PC-3 (cell line): ENCODE measurements at regions of chr10 and their contacts with region 1.

Region 1: DNA sequence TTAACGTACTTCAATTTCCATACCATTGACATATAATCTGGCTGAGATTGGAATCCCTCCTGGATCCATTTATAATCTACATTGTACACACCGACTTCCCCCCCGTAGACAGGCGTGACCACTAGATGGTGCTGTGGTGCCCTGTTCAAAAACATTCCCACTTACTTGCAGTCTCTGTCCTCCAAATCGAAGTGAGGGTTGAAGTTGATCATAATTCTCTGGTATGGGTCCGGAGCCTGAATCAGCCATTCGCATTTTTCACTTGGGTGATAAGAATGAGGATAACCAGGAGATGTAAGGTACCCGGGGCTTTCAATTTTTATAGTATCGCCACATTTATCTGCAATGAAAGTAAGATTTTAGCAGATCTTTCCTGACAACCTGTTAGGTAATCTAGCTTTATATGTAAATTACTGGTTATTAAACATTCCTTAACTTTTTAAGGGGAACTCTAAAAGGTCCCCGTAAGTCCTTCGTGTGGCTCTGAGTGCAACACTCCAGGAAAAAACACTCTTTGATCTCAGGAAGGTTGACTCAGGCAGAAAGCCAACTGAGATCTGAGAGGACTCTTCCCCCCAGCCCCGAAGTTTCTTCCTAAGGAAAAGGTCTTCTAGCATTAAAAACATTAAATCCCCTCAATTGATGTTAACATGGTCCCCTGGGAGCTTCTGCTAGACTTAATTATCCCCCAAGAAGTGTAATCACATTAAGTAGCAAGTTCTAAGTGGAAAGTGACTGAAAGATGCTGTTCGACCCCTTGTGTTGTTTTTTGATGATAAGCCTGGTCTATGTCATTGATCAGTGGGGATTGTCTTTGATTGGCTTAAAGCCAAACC is 3.7 kb downstream of the NRP1 start:
- DNase-seq: peak; percentile 100
- ATAC-seq: peak; percentile 21
- H3K4me3 ChIP-seq: peak overlapping the region; percentile 69
- H3K27ac ChIP-seq: peak overlapping the region; percentile 86
- H3K4me1 ChIP-seq: peaks cover 46% of the 10 kb centered on the region
- H3K27me3 ChIP-seq: no peaks in the 10 kb centered on the region
- CTCF ChIP-seq: peak; percentile 100

Region 2: GRCh38 chr10:33216661-33217427 is 113.9 kb before region 1 on chr10:
- CTCF ChIA-PET with region 1: no interaction called
- POLR2A ChIA-PET with region 1: interaction called, 3 read pairs
- intact Hi-C with region 1: loop called (anchors 1 kb)
- DNase-seq: peak; percentile 100
- ATAC-seq: peak; percentile 91
- H3K4me3 ChIP-seq: peak overlapping the region; percentile 6; the same call in 1 of the 2 replicates
- H3K27ac ChIP-seq: peak overlapping the region; percentile 65
- H3K4me1 ChIP-seq: peaks cover 46% of the 10 kb centered on the region
- H3K27me3 ChIP-seq: no peaks in the 10 kb centered on the region
- CTCF ChIP-seq: no peak

Region 3: DNA sequence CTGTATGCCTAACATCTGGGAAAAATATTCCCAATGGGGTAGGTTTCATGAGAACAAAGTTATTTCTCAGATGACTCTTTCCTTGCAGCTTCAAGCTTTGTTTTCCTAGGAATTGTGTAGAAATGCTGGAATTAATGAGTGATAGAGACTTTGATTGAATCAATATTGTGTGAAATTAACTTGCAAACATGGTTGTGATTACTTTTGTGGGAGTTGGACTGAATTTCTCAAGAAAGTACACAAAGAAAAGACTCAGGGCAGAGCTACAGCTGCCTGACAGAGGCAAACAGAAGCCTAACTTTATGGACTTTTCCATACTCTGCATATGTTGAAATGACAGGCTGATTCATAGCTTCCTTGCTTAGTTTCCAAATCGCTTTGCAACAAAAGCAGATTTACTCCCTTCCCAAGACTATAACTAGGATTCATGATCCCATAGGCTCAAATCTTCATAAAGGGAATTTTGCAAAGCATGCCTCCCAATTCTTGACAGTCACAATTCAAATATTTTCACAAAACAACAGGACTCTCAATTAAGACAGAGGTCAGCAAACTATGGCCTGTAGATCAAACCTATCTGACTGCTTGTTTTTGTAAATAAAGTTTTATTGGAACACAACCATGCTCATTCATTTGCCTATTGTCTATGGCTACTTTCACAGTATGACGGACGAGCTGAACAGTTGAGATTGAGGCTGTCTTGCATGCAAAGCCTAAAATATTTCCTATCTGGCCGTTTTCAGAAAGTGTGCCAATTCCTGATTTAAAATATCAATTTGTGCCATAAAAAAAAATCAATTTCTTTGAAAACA is 23.9 kb before region 1 on chr10:
- CTCF ChIA-PET with region 1: no interaction called
- POLR2A ChIA-PET with region 1: no interaction called
- intact Hi-C with region 1: no loop called
- DNase-seq: peak; percentile 86
- ATAC-seq: peak; percentile 59
- H3K4me3 ChIP-seq: no peak overlapping the region
- H3K27ac ChIP-seq: peak overlapping the region; percentile 52
- H3K4me1 ChIP-seq: peaks cover 21% of the 10 kb centered on the region
- H3K27me3 ChIP-seq: no peaks in the 10 kb centered on the region
- CTCF ChIP-seq: no peak

Region 4: GRCh38 chr10:33559105-33559504 is 228.3 kb after region 1 on chr10:
- CTCF ChIA-PET with region 1: no interaction called
- POLR2A ChIA-PET with region 1: no interaction called
- intact Hi-C with region 1: loop called (anchors 1 kb)
- DNase-seq: peak; percentile 100
- ATAC-seq: peak; percentile 100
- H3K4me3 ChIP-seq: no peak overlapping the region
- H3K27ac ChIP-seq: no peak overlapping the region
- H3K4me1 ChIP-seq: peaks cover 13% of the 10 kb centered on the region
- H3K27me3 ChIP-seq: no peaks in the 10 kb centered on the region
- CTCF ChIP-seq: peak; percentile 41; the same call in 1 of the 2 replicates

Region 5: DNA sequence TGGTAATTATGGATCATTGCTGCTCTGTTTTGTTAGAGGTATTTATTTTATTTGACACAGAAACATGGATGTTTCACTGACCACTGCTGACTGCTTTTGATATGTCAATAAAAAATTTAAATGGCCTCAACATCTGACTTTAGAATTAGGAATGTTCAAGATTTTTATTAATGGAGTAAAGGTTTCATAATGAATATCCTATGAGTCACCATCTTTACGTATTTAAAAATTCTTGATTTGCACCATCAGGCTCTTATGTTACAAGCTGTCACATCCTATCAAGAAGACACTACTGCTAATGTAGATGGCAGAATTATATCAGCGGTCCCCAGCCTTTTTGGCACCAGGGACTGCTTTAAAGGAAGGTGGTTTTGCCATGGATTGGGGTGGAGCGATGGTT is 582.4 kb after region 1 on chr10:
- CTCF ChIA-PET with region 1: no interaction called
- POLR2A ChIA-PET with region 1: no interaction called
- intact Hi-C with region 1: loop called (anchors 5 kb)
- DNase-seq: peak; percentile 94
- ATAC-seq: peak; percentile 92
- H3K4me3 ChIP-seq: no peak overlapping the region
- H3K27ac ChIP-seq: peak overlapping the region; percentile 0; the same call in 1 of the 2 replicates
- H3K4me1 ChIP-seq: peaks cover 14% of the 10 kb centered on the region
- H3K27me3 ChIP-seq: no peaks in the 10 kb centered on the region
- CTCF ChIP-seq: no peak

Region 6: GRCh38 chr10:34139559-34139958 is 808.8 kb after region 1 on chr10:
- CTCF ChIA-PET with region 1: no interaction called
- POLR2A ChIA-PET with region 1: no interaction called
- intact Hi-C with region 1: loop called (anchors 5 kb)
- DNase-seq: peak; percentile 42
- ATAC-seq: no peak
- H3K4me3 ChIP-seq: no peak overlapping the region
- H3K27ac ChIP-seq: no peak overlapping the region
- H3K4me1 ChIP-seq: peaks cover 23% of the 10 kb centered on the region
- H3K27me3 ChIP-seq: no peaks in the 10 kb centered on the region
- CTCF ChIP-seq: no peak

Region 7: DNA sequence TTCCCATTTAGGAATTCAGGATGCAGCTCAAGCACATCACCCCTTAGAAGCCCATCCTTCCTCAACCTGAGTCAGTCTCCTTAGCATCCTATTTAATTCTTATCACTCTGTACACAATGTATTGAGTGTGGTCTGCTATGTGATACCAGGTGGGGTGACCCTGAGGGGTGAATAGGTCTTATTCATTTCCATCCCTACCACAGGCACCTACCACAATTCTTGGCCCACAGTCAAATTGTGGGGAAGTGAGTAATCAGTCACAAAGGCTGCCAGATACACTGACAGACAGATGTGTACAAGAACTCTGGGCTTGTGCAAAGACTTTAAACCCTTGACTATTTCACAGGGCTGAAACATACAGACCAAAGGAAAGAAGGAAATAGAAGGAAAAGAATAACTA is 923.8 kb after region 1 on chr10:
- CTCF ChIA-PET with region 1: no interaction called
- POLR2A ChIA-PET with region 1: no interaction called
- intact Hi-C with region 1: loop called (anchors 2 kb)
- DNase-seq: peak; percentile 100
- ATAC-seq: peak; percentile 89
- H3K4me3 ChIP-seq: no peak overlapping the region
- H3K27ac ChIP-seq: peak overlapping the region; percentile 3
- H3K4me1 ChIP-seq: peaks cover 28% of the 10 kb centered on the region
- H3K27me3 ChIP-seq: no peaks in the 10 kb centered on the region
- CTCF ChIP-seq: no peak

Region 8: GRCh38 chr10:35005868-35006267 is 1675.1 kb after region 1 on chr10:
- CTCF ChIA-PET with region 1: no interaction called
- POLR2A ChIA-PET with region 1: no interaction called
- intact Hi-C with region 1: loop called (anchors 10 kb)
- DNase-seq: peak; percentile 100
- ATAC-seq: peak; percentile 81
- H3K4me3 ChIP-seq: no peak overlapping the region
- H3K27ac ChIP-seq: peak overlapping the region; percentile 82
- H3K4me1 ChIP-seq: peaks cover 52% of the 10 kb centered on the region
- H3K27me3 ChIP-seq: no peaks in the 10 kb centered on the region
- CTCF ChIP-seq: no peak